AG04450 (cell line): ENCODE measurements at regions of chr15 and their contacts with region 1.

Region 1: GRCh38 chr15:80455668-80456442 is 51.7 kb downstream of the ARNT2 start:
- DNase-seq: peak; percentile 93
- H3K4me3 ChIP-seq: peak overlapping the region; percentile 17; the same call in 1 of the 2 replicates
- H3K27ac ChIP-seq: peak overlapping the region; percentile 87
- H3K27me3 ChIP-seq: no peaks in the 10 kb centered on the region
- CTCF ChIP-seq: peak; percentile 97

Region 2: DNA sequence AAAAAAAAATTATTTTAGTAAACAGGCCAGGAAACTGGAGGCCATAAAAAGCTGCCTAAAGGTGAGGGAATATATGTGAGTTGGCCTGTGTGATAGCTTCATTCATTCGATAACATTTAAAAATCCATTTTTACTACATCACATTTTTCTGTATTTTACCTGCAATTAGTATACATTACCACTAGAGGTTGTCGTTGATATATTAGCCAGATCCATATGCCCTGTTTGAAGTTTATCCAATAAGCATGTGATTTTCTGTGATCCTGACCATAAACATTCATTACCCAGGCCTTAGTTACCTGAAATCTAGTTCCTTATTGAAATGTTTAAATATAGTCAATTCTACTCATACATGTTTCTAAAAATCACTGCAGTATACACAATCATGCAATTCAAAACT is 19.7 kb after region 1 on chr15:
- CTCF ChIA-PET with region 1: interaction called, 10 read pairs
- POLR2A ChIA-PET with region 1: interaction called, 6 read pairs
- DNase-seq: no peak
- H3K4me3 ChIP-seq: no peak overlapping the region
- H3K27ac ChIP-seq: no peak overlapping the region
- H3K27me3 ChIP-seq: no peaks in the 10 kb centered on the region
- CTCF ChIP-seq: peak; percentile 28

Region 3: GRCh38 chr15:80480909-80481308 is 25.1 kb after region 1 on chr15:
- CTCF ChIA-PET with region 1: interaction called, 10 read pairs
- POLR2A ChIA-PET with region 1: interaction called, 6 read pairs
- DNase-seq: peak; percentile 74
- H3K4me3 ChIP-seq: no peak overlapping the region
- H3K27ac ChIP-seq: peak overlapping the region; percentile 90
- H3K27me3 ChIP-seq: no peaks in the 10 kb centered on the region
- CTCF ChIP-seq: no peak

Region 4: DNA sequence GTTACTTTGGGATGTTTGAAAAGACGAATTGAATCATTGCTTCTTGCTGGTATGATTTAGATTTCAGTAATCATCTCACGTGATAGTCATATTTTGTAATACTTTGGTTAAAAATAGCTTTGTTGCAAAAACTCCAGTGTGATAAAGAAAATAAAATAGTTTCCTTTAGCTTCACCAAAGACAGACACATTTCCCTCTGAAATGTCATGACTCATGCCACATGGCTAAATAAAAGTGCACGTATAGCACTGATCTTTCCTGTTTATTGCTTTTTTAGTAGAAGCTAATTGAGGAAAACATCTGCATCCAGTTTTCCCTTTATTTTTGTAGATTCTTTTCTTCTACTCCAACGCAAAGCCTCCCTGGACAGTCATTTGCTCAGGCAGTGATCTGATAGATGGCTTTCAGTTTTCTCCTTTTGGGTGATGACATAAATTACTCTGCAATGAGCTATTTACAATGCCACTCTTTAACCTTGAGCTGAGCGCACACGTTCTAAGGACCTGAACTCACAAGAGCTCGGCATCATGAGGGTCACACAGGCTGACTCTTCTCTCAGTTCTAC is 33.3 kb after region 1 on chr15:
- CTCF ChIA-PET with region 1: interaction called, 14 read pairs
- POLR2A ChIA-PET with region 1: interaction called, 3 read pairs
- DNase-seq: peak; percentile 65
- H3K4me3 ChIP-seq: no peak overlapping the region
- H3K27ac ChIP-seq: peak overlapping the region; percentile 96
- H3K27me3 ChIP-seq: no peaks in the 10 kb centered on the region
- CTCF ChIP-seq: no peak

Region 5: DNA sequence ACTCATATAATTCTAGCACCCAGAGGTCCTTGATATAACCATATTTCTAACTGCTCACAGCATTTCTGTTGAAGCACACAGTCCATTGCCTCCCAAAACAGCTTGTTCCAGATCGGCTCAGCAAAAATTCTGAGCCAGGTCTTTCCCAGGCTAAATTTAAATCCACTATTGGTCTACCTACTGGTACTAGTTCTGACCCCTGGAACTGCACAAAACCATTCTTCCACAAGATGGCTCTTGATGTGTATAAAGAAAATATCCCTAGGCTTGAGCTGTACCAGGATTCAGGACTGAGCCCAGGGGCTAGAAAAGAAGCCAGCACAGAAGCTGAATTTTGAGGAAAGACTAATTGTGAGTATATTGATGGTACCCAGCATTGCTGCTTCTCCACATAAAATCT is 163.8 kb after region 1 on chr15:
- CTCF ChIA-PET with region 1: interaction called, 12 read pairs
- POLR2A ChIA-PET with region 1: no interaction called
- DNase-seq: no peak
- H3K4me3 ChIP-seq: no peak overlapping the region
- H3K27ac ChIP-seq: no peak overlapping the region
- H3K27me3 ChIP-seq: no peaks in the 10 kb centered on the region
- CTCF ChIP-seq: peak; percentile 44

Region 6: GRCh38 chr15:80970018-80970658 is 514.3 kb after region 1 on chr15:
- CTCF ChIA-PET with region 1: interaction called, 24 read pairs
- POLR2A ChIA-PET with region 1: interaction called, 3 read pairs
- DNase-seq: no peak
- H3K4me3 ChIP-seq: no peak overlapping the region
- H3K27ac ChIP-seq: no peak overlapping the region
- H3K27me3 ChIP-seq: no peaks in the 10 kb centered on the region
- CTCF ChIP-seq: peak; percentile 79